Panc1 (cell line): ENCODE measurements at regions of chr19 and their contacts with region 1.

Region 1: DNA sequence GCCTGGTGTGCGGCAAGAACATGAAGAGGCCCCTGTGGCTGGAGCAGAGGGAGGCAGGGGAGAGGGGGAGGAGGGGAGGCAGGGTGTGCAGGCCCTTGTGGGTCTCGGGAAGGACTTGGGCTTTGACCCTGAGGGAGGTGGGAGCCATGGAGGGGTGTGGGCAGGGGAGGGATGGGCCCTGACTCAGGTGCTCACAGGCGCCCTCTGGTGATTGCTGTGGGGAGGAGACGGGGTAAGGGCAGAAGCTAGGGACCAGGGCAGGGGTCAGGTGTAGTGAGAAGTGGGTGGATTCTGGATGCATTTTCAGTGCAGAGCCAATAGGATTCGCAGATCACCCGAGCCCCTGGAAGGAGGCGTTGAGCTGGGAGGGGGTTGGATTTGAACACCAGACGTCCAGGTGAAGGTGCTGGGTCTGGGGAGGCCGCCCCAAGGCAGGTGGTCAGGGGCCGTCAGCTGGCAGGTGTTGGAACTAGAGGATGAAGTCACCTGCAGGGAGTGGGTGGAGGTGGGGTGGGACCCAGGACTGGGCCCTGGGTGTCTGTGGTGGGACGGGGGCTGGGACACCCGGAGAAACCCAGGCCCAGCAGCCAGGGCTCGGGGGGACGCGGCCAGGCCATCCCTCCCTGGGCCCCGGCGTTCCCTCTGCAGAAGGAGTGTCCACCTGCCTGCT is 185.4 kb downstream of the KDM4B start:
- DNase-seq: no peak
- ATAC-seq: peak; percentile 79
- H3K4me3 ChIP-seq: no peak overlapping the region
- H3K27ac ChIP-seq: no peak overlapping the region
- H3K4me1 ChIP-seq: no peaks in the 10 kb centered on the region
- H3K27me3 ChIP-seq: no peaks in the 10 kb centered on the region
- CTCF ChIP-seq: peak; percentile 79

Region 2: DNA sequence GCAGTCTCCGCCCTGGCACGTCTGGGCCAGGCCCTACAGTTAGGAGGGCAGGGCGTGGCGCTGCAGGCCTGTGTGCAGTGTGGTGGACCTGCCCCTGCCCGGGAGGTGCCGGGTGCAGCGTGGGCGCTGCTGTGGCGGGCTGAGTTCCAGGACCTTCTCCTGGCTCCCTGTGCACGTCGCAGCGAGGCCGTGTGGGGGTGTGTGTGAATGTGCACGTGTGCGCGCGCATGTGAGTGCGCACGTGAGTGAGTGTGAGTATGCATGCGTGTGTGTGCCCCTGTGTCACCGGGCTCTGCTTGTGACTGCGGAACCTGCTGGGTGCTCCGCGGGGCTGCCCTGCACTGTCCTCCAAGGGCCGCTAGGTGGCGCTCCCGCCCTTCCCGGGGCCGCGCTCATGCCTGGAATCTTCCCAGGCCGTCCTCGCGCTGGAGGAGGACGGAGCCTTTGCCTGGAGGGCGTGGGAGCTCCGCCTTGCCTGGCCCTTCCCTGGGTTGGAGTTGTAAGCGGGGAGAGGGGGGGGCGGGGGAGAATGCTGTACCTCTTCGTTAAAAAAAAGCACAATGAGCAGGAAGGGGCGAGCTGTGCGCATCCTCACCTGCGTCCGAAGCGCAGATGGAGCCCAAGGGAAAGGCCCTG is 106.1 kb before region 1 on chr19:
- CTCF ChIA-PET with region 1: interaction called, 3 read pairs
- POLR2A ChIA-PET with region 1: no interaction called
- in situ Hi-C with region 1: no loop called
- intact Hi-C with region 1: loop called (anchors 5 kb)
- DNase-seq: no peak
- ATAC-seq: peak; percentile 79
- H3K4me3 ChIP-seq: no peak overlapping the region
- H3K27ac ChIP-seq: 0 out of 2 replicates have a peak overlapping the region, but pooled peaks have one; percentile 34
- H3K4me1 ChIP-seq: peaks cover 18% of the 10 kb centered on the region
- H3K27me3 ChIP-seq: no peaks in the 10 kb centered on the region
- CTCF ChIP-seq: peak; percentile 94

Region 3: GRCh38 chr19:5515737-5516136 is 361.5 kb after region 1 on chr19:
- CTCF ChIA-PET with region 1: interaction called, 10 read pairs
- POLR2A ChIA-PET with region 1: no interaction called
- in situ Hi-C with region 1: no loop called
- intact Hi-C with region 1: no loop called
- DNase-seq: no peak
- ATAC-seq: no peak
- H3K4me3 ChIP-seq: no peak overlapping the region
- H3K27ac ChIP-seq: no peak overlapping the region
- H3K4me1 ChIP-seq: no peaks in the 10 kb centered on the region
- H3K27me3 ChIP-seq: no peaks in the 10 kb centered on the region
- CTCF ChIP-seq: no peak

Region 4: DNA sequence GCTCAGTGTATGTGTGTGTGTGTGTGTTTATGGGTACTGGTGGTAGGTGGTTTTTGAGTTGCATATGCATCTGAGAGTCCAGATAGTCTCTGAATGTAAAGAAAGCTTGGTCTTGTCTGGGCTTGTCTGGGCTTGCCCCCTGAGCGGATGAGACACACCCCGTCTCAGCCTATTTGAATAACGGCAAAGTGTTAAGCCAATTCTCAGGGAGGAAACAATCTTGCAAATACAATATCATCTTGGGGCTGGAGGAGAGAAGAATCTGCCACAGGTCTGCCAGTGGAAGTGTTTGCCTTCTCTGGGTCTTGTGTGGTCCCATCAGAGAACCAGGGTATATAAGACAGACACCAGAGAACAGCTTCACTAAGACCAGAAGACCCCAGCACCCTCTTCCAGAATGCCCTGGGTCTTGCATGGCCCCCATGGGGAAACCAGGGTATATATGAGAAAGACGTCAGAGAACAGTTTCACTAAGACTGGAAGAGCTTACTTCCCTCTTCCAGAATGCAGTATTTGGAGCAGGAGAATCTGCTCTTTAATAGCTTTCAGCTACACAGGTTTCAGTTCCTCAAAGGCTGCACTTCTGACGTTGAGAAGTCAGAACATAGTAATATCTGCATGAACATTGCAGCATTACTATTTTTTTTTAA is 1423.3 kb after region 1 on chr19:
- CTCF ChIA-PET with region 1: no interaction called
- POLR2A ChIA-PET with region 1: no interaction called
- in situ Hi-C with region 1: no loop called
- intact Hi-C with region 1: no loop called
- DNase-seq: no peak
- ATAC-seq: no peak
- H3K4me3 ChIP-seq: no peak overlapping the region
- H3K27ac ChIP-seq: no peak overlapping the region
- H3K4me1 ChIP-seq: no peaks in the 10 kb centered on the region
- H3K27me3 ChIP-seq: no peaks in the 10 kb centered on the region
- CTCF ChIP-seq: no peak